Calu3 (cell line): ENCODE measurements at regions of chr3 and their contacts with region 1.

Region 1: GRCh38 chr3:187974871-187975271 is 179.1 kb upstream of the LPP start:
- DNase-seq: no peak
- H3K4me3 Mint-ChIP-seq: no peak overlapping the region
- H3K27ac Mint-ChIP-seq: no peak overlapping the region
- H3K4me1 Mint-ChIP-seq: peaks cover 44% of the 10 kb centered on the region
- H3K27me3 Mint-ChIP-seq: no peaks in the 10 kb centered on the region
- CTCF ChIP-seq: no peak

Region 2: DNA sequence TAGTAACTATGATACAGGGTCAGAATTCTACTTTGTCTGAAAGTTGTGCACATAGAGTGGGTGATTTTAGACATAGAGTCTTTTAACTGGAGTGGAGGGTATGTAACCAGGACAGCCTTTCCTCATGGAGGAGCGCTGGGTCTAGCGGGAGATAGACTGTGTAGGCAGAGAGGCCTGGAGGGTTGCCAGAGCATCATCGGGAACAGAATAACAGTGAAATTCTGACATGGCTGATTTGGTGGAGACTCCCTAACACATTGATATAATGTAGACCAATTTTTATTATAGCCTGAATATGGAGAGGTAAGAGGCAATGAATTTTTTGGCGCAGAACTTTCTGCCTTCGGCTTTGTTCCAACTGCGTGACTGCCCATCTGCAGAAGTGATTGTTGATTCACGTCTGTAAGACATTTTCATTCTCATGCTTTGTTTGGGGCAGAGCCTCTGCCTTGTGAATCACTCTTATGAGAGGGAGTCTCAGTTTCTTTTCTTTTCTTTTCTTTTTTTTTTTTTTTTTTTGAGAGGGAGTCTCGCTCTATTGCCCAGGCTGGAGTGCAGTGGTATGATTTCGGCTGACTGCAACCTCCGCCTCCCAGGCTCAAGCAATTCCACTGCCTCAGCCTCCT is 195.1 kb after region 1 on chr3:
- CTCF ChIA-PET with region 1: no interaction called
- intact Hi-C with region 1: loop called (anchors 5 kb)
- DNase-seq: no peak
- H3K4me3 Mint-ChIP-seq: no peak overlapping the region
- H3K27ac Mint-ChIP-seq: no peak overlapping the region
- H3K4me1 Mint-ChIP-seq: peaks cover 64% of the 10 kb centered on the region
- H3K27me3 Mint-ChIP-seq: no peaks in the 10 kb centered on the region
- CTCF ChIP-seq: no peak